Panc1 (cell line): ENCODE measurements at regions of chr2 and their contacts with region 1.

Region 1: GRCh38 chr2:130313812-130314334 is 28.8 kb upstream of the IMP4 start:
- DNase-seq: no peak
- ATAC-seq: 0 out of 2 replicates have a peak, but pooled peaks have one; percentile 23
- H3K4me3 ChIP-seq: no peak overlapping the region
- H3K27ac ChIP-seq: no peak overlapping the region
- H3K4me1 ChIP-seq: no peaks in the 10 kb centered on the region; the same call in 1 of the 2 replicates
- H3K27me3 ChIP-seq: peaks cover 6% of the 10 kb centered on the region
- CTCF ChIP-seq: no peak

Region 2: DNA sequence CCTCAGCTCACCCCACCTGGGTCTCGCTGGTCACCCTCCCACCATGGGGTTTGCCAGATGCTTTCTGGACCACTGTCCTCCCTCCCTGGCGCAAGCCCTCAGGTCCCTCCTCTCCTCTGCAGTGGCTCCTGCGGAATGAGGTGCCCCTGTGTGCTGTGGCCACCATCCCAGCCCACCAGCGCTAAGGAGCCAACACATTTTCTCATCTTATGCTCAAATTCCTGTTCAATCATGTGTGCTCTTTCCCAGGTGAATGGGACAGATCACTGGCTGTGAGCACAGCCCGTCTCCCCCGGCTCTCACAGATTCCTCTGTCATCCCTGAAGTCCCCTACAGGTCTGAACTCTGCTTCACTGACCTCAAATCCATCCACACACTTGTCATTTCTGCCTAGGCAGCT is 153.7 kb before region 1 on chr2:
- CTCF ChIA-PET with region 1: no interaction called
- POLR2A ChIA-PET with region 1: no interaction called
- in situ Hi-C with region 1: no loop called
- intact Hi-C with region 1: no loop called
- DNase-seq: no peak
- ATAC-seq: no peak
- H3K4me3 ChIP-seq: no peak overlapping the region
- H3K27ac ChIP-seq: no peak overlapping the region
- H3K4me1 ChIP-seq: no peaks in the 10 kb centered on the region
- H3K27me3 ChIP-seq: no peaks in the 10 kb centered on the region
- CTCF ChIP-seq: no peak

Region 3: DNA sequence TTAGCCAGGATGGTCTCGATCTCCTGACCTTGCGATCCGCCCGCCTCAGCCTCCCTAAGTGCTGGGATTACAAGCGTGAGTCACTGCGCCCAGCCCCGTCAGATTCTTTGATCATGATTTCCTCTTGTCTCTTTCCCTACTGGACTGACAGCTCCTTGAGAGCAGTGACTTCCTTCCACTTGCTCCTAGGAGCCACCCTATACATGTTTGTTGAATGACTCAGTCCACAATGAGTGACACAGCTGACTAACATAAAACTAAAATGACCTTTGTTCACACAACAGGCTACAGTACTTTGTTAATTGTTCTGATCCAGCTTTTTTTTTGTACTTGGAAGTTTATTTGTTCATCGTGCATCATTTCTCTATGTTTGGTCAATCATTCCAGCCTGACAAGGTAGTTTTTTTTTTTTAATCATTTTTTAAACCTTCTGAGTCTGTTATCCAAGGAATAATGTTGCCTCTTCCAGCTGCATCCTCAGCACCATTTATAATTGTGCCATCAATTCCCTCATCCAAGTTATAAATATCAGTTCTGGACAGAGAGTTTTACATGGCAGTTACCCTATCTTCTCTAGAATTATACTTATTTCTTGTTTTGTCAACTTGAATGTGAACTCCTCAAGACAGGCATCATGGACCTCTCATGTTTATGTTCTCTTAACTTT is 72.7 kb before region 1 on chr2:
- CTCF ChIA-PET with region 1: interaction called, 10 read pairs
- POLR2A ChIA-PET with region 1: no interaction called
- in situ Hi-C with region 1: no loop called
- intact Hi-C with region 1: no loop called
- DNase-seq: peak; percentile 90
- ATAC-seq: peak; percentile 100
- H3K4me3 ChIP-seq: peak overlapping the region in 1 of 2 experiments; percentile 21; a peak in 1 of 4 replicates
- H3K27ac ChIP-seq: peak overlapping the region; percentile 70
- H3K4me1 ChIP-seq: peaks cover 9% of the 10 kb centered on the region
- H3K27me3 ChIP-seq: no peaks in the 10 kb centered on the region
- CTCF ChIP-seq: no peak